Dorsolateral prefrontal cortex (tissue), 120 donors: ENCODE measurements at regions of chr12 and their contacts with region 1.

Region 1: GRCh38 chr12:6867413-6868210 is at the start of gene TPI1:
- DNase-seq: peak; percentile 74 to 92 (median 90)
- H3K4me3 ChIP-seq: peak within 1 kb of the TSS; percentile 53 to 100 (median 97)
- H3K27ac ChIP-seq: peak within 1 kb of the TSS; percentile 74 to 100 (median 98)
- H3K27me3 ChIP-seq: no peaks in the 10 kb centered on the region
- CTCF ChIP-seq: peak in 37 of 56 donors; percentile 4 to 58 (median 26)
- total RNA-seq, gene TPI1: 261 to 851 (median 575) TPM

Region 2: DNA sequence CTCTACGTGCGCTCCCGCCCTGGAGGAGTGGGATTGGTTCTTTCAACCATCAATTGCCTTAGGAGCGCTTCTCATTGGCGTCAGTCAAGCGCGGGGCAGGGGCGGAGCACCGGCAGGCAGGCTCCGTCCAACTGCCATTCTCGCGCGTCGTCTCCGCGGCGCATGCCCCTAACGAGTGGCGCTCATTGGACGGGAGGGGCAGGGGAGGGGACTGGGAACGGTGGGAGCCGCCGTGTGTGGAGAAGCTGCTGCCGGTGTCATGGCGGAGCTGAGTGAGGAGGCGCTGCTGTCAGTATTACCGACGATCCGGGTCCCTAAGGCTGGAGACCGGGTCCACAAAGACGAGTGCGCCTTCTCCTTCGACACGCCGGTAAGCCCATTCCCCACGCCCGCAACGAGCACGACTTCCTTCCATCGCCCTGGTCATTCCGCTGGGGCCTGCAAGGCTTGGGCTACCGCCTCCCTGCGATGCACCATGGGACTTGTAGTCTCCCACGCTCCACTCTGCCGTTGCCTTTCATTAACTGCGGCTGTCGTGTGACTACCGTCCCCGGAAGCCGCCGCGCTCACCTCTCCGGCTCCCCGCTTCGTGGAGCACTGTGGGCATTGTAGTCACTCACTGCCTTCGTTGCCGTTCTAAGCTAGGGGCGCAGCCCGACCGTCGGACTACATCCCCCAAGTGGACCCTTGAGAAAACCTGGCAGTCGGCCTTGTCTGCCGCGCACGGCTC is 15.5 kb before region 1 on chr12 and contains the start of gene USP5:
- intact Hi-C with region 1: loop called (anchors 2 kb)
- DNase-seq: peak; percentile 98 to 100 (median 100)
- H3K4me3 ChIP-seq: peak within 1 kb of the TSS; percentile 61 to 98 (median 79)
- H3K27ac ChIP-seq: peak within 1 kb of the TSS; percentile 83 to 99 (median 95)
- H3K27me3 ChIP-seq: no peaks in the 10 kb centered on the region
- CTCF ChIP-seq: peak in 41 of 56 donors; percentile 7 to 58 (median 29)
- total RNA-seq, gene USP5: 77.3 to 191 (median 146) TPM

Region 3: GRCh38 chr12:6904280-6905278 is 37.0 kb after region 1 on chr12 and contains the start of gene LRRC23:
- intact Hi-C with region 1: loop called (anchors 5 kb)
- DNase-seq: peak; percentile 97 to 99 (median 99)
- H3K4me3 ChIP-seq: peak within 1 kb of the TSS; percentile 55 to 99 (median 81)
- H3K27ac ChIP-seq: peak within 1 kb of the TSS; percentile 13 to 95 (median 87)
- H3K27me3 ChIP-seq: no peaks in the 10 kb centered on the region
- CTCF ChIP-seq: peak in 24 of 56 donors; percentile 8 to 54 (median 25)
- total RNA-seq, gene LRRC23: 16.3 to 32.4 (median 22.4) TPM

Region 4: DNA sequence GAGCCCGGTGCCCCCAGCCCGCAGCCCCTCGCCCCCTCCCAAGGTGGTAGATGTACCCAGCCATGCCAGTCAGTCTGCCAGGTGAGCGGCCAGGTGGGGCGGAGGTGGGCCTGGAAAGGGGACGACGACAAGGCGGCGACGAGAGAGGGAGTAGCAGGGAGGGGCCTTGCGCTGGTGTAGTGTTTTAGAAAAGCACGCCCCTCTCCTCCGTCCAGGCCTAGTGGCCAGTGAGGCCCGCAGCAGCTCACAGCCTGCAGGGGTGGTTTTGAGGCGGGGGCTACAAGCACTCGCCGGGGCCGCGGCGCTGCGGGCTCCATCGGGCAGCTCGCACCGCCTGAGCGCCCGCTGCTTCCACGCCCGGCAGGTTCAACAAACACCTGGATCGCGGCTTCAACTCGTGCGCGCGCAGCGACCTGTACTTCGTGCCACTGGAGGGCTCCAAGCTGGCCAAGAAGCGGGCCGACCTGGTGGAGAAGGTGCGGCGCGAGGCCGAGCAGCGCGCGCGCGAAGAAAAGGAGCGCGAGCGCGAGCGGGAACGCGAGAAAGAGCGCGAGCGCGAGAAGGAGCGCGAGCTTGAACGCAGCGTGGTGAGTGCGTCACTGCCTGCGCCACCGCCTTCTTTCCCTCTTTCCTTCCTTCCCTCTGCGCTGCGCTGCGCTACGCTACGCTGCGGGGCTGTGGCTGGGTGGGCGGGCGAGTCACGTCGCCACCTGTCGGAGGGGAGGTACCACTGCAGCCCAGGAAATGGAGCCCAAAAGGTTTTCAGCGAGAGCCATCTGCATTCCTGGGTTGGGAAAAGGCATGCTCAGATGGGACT is 70.1 kb after region 1 on chr12:
- intact Hi-C with region 1: loop called in 1 of 2 experiments (anchors 2 kb)
- DNase-seq: peak; percentile 84 to 96 (median 94)
- H3K4me3 ChIP-seq: peak overlapping the region; percentile 59 to 95 (median 82)
- H3K27ac ChIP-seq: peak overlapping the region; percentile 83 to 100 (median 99)
- H3K27me3 ChIP-seq: no peaks in the 10 kb centered on the region
- CTCF ChIP-seq: peak; percentile 93 to 99 (median 98)